ENCODE measurements at regions of chr15 and their contacts with region 1.

Region 1: DNA sequence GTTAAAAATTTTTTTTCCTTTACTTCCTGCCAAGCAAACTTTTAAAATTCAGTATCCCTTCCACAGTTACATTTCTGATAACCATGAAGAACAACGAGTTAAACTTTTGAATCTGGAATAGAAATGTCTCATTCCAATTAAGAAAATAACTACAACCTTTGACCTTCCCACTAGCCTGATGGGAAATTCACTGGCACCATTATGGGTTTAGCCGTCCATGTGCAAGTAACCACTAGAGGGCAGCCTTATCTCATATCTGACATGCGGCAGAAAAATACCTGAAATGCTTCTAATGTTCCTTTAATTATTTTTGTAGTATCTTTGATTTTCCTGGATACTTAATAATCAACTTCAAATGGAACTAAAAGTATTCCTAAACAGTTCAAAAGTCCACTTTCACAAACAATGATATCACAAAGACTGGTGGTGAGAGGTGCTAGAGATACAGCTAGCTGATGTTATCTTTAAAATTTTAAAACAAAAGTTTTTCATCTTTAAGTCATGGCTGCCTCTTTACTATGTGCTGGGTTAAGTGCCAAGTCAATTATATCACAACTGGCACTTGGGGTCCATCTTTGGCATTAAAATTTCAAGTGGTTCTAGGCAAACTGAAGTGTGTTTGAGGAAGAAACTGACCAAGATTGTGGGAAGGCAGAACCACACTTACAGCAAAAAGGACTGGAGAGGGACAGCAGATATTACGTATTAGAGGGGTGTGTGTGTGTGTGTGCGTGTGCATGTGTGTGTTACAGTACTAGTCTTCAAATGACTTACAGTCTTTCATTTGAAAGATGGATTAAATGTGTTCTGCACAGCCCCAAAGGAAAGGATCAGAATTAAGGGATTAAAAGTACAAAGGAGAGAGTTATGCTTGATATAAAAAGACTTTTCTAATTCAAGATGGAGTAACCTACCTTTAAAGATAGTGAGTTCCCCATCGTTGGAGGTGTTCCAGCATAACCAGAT is 107.1 kb upstream of the ICE2 start:
- DNase-seq: no peak
- ATAC-seq: peak; percentile 77
- H3K4me3 Mint-ChIP-seq: no peak overlapping the region
- H3K27ac Mint-ChIP-seq: peak overlapping the region; percentile 32
- H3K4me1 Mint-ChIP-seq: peaks cover 30% of the 10 kb centered on the region
- H3K27me3 Mint-ChIP-seq: peaks cover 27% of the 10 kb centered on the region
- CTCF ChIP-seq: peak; percentile 79

Region 2: DNA sequence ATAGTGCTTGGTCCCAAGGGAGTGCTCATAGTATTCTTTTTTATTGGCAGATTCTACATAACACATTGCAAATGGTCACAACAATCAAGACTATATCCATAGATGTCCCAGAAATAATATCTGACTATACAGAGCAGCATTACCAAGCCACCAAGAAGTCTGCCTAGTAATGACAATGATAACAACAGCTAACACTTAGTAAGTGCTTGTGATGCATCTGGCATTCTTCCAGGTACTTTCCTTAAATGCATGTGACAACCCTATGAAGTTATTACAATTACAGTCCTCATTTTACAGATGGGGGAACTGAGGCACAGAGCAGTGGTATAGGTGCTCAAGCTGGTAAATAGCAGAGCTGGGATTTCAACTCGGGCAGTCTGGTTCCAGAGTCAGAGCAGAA is 57.5 kb before region 1 on chr15:
- CTCF ChIA-PET with region 1: no interaction called
- POLR2A ChIA-PET with region 1: no interaction called
- intact Hi-C with region 1: no loop called
- DNase-seq: no peak
- ATAC-seq: no peak
- H3K4me3 Mint-ChIP-seq: no peak overlapping the region
- H3K27ac Mint-ChIP-seq: no peak overlapping the region
- H3K4me1 Mint-ChIP-seq: peaks cover 7% of the 10 kb centered on the region
- H3K27me3 Mint-ChIP-seq: no peaks in the 10 kb centered on the region
- CTCF ChIP-seq: no peak

Region 3: DNA sequence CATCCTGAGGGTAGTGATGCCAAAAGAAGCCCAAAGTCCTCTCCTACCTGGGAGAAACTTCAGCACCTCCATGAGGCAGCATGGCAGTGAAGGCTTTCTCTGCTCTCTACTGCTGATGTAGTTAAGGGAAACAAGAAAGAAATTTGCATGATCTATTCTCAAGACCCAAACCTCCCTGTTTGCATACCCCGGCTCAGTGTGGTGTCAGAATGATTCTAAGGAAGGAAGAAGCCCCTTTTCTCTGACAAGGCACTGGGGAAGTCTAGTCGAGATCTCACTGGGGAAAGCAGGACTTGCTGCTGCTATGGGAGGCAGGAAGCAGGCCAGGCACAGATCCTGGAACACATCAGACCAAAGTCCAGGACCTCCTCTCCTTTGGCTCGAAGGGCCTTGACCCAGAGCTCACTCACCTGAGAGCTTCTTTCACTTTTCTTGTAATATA is 17.7 kb before region 1 on chr15:
- CTCF ChIA-PET with region 1: interaction called, 5 read pairs
- POLR2A ChIA-PET with region 1: interaction called, 5 read pairs
- intact Hi-C with region 1: loop called (anchors 2 kb)
- DNase-seq: no peak
- ATAC-seq: peak; percentile 89
- H3K4me3 Mint-ChIP-seq: peak overlapping the region; percentile 50
- H3K27ac Mint-ChIP-seq: peak overlapping the region; percentile 86
- H3K4me1 Mint-ChIP-seq: peaks cover 31% of the 10 kb centered on the region
- H3K27me3 Mint-ChIP-seq: no peaks in the 10 kb centered on the region
- CTCF ChIP-seq: no peak

Region 4: GRCh38 chr15:60682115-60682514 is 96.1 kb after region 1 on chr15:
- CTCF ChIA-PET with region 1: no interaction called
- POLR2A ChIA-PET with region 1: no interaction called
- intact Hi-C with region 1: no loop called
- DNase-seq: no peak
- ATAC-seq: no peak
- H3K4me3 Mint-ChIP-seq: no peak overlapping the region
- H3K27ac Mint-ChIP-seq: no peak overlapping the region
- H3K4me1 Mint-ChIP-seq: peaks cover 3% of the 10 kb centered on the region
- H3K27me3 Mint-ChIP-seq: no peaks in the 10 kb centered on the region
- CTCF ChIP-seq: no peak

Region 5: DNA sequence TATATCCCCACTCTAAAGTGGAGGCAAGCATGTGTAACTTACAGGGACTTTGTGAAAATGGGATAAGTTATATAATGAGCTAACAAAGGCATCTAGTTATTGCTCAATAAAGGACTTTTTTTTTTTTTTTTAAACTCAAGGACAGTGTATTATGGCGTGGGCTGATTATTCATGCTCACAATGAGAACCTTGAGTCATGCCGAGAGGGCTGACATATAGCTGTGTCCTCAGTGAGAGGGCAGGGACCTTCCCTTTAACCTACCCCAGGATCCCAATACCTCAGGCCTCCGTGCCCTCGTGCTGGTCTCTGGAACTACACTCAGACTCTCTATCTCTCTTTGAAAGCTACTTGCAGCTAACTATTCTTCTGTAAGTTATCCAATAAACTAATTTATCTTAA is 212.8 kb after region 1 on chr15:
- CTCF ChIA-PET with region 1: no interaction called
- POLR2A ChIA-PET with region 1: no interaction called
- intact Hi-C with region 1: loop called (anchors 5 kb)
- DNase-seq: no peak
- ATAC-seq: no peak
- H3K4me3 Mint-ChIP-seq: no peak overlapping the region
- H3K27ac Mint-ChIP-seq: no peak overlapping the region
- H3K4me1 Mint-ChIP-seq: peaks cover 8% of the 10 kb centered on the region
- H3K27me3 Mint-ChIP-seq: no peaks in the 10 kb centered on the region
- CTCF ChIP-seq: no peak

Region 6: GRCh38 chr15:61195116-61196002 is 609.3 kb after region 1 on chr15:
- CTCF ChIA-PET with region 1: no interaction called
- POLR2A ChIA-PET with region 1: no interaction called
- intact Hi-C with region 1: loop called (anchors 10 kb)
- DNase-seq: no peak
- ATAC-seq: no peak
- H3K4me3 Mint-ChIP-seq: no peak overlapping the region
- H3K27ac Mint-ChIP-seq: no peak overlapping the region
- H3K4me1 Mint-ChIP-seq: no peaks in the 10 kb centered on the region
- H3K27me3 Mint-ChIP-seq: peaks cover 2% of the 10 kb centered on the region
- CTCF ChIP-seq: peak; percentile 29

Region 7: GRCh38 chr15:62060113-62060895 is 1474.3 kb after region 1 on chr15 and contains the start of gene VPS13C:
- CTCF ChIA-PET with region 1: no interaction called
- POLR2A ChIA-PET with region 1: no interaction called
- intact Hi-C with region 1: loop called (anchors 10 kb)
- DNase-seq: peak; percentile 93
- ATAC-seq: peak; percentile 84
- H3K4me3 Mint-ChIP-seq: peak within 1 kb of the TSS; percentile 94
- H3K27ac Mint-ChIP-seq: peak within 1 kb of the TSS; percentile 94
- H3K4me1 Mint-ChIP-seq: peaks cover 40% of the 10 kb centered on the region
- H3K27me3 Mint-ChIP-seq: no peaks in the 10 kb centered on the region
- CTCF ChIP-seq: peak; percentile 42
- total RNA-seq, gene VPS13C: 140 and 172 TPM in 2 replicates

Measured in activated B cell treated with CpG ODN at 0.5 μM for 24 hours (primary cell).